ENCODE measurements at regions of chr7 and their contacts with region 1.

Region 1: GRCh38 chr7:100221231-100221718 is 1.5 kb downstream of the PVRIG start:
- DNase-seq: peak; percentile 62 to 95 (median 78)
- ATAC-seq: peak; percentile 69
- H3K4me3 ChIP-seq: peak overlapping the region; percentile 89
- H3K4me3 Mint-ChIP-seq: peak overlapping the region; percentile 95
- H3K27ac ChIP-seq: peak overlapping the region; percentile 98 to 99
- H3K27ac Mint-ChIP-seq: peak overlapping the region; percentile 98
- H3K4me1 ChIP-seq: peaks cover 85% of the 10 kb centered on the region
- H3K4me1 Mint-ChIP-seq: peaks cover 72% of the 10 kb centered on the region
- H3K27me3 ChIP-seq: no peaks in the 10 kb centered on the region
- H3K27me3 Mint-ChIP-seq: no peaks in the 10 kb centered on the region
- CTCF ChIP-seq: no peak

Region 2: DNA sequence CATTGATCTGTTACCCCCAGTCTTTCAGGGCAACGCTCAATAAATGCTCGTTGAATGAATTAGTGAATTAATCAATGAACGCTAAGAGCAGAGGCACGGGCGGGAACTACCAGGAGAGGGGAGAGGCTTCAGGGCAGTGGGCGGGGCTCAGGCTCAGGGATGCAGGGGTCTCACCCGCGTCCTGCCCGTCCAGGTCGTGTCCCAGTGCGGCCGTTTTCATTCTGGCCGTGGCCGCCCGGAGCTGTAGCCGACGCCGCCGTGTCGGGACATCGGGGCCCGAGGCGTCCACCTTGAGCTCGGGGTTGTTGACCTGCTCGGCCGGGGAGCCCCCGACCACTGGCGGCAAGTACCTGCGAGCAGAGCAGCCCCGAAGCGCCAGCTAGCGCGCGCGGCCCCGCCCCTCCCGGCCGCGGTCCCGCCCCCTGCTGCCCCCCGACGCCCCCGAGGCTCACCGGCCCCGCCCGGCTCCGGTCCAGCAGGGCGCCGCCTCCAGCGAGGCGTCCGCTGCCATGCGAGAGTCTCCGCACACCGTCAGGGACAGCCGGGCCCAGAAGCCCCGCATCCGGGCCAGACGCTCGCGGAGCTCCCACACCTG is 50.1 kb before region 1 on chr7:
- CTCF ChIA-PET with region 1: interaction called, 4 read pairs
- POLR2A ChIA-PET with region 1: interaction called, 14 read pairs
- intact Hi-C with region 1: loop called in 1 of 2 experiments (anchors 10 kb)
- DNase-seq: peak in 6 of 14 experiments; percentile 25 to 69 (median 56)
- ATAC-seq: peak; percentile 22
- H3K4me3 ChIP-seq: peak overlapping the region; percentile 52
- H3K4me3 Mint-ChIP-seq: peak overlapping the region; percentile 85
- H3K27ac ChIP-seq: peak overlapping the region in 1 of 2 donors; percentile 50
- H3K27ac Mint-ChIP-seq: peak overlapping the region; percentile 91
- H3K4me1 ChIP-seq: peaks cover 65% of the 10 kb centered on the region
- H3K4me1 Mint-ChIP-seq: peaks cover 62% of the 10 kb centered on the region
- H3K27me3 ChIP-seq: peaks cover 0 to 3% of the 10 kb centered on the region in 2 experiments
- H3K27me3 Mint-ChIP-seq: no peaks in the 10 kb centered on the region
- CTCF ChIP-seq: no peak

Region 3: GRCh38 chr7:100190048-100190711 is 31.1 kb before region 1 on chr7:
- CTCF ChIA-PET with region 1: interaction called, 6 read pairs
- POLR2A ChIA-PET with region 1: interaction called, 4 read pairs
- intact Hi-C with region 1: loop called (anchors 1 kb)
- DNase-seq: peak in 3 of 14 experiments; percentile 72 to 77 (median 73)
- ATAC-seq: peak; percentile 84
- H3K4me3 ChIP-seq: no peak overlapping the region
- H3K4me3 Mint-ChIP-seq: no peak overlapping the region
- H3K27ac ChIP-seq: no peak overlapping the region
- H3K27ac Mint-ChIP-seq: peak overlapping the region; percentile 25
- H3K4me1 ChIP-seq: peaks cover 1% of the 10 kb centered on the region
- H3K4me1 Mint-ChIP-seq: peaks cover 44% of the 10 kb centered on the region
- H3K27me3 ChIP-seq: no peaks in the 10 kb centered on the region
- H3K27me3 Mint-ChIP-seq: no peaks in the 10 kb centered on the region
- CTCF ChIP-seq: peak; percentile 55

Region 4: DNA sequence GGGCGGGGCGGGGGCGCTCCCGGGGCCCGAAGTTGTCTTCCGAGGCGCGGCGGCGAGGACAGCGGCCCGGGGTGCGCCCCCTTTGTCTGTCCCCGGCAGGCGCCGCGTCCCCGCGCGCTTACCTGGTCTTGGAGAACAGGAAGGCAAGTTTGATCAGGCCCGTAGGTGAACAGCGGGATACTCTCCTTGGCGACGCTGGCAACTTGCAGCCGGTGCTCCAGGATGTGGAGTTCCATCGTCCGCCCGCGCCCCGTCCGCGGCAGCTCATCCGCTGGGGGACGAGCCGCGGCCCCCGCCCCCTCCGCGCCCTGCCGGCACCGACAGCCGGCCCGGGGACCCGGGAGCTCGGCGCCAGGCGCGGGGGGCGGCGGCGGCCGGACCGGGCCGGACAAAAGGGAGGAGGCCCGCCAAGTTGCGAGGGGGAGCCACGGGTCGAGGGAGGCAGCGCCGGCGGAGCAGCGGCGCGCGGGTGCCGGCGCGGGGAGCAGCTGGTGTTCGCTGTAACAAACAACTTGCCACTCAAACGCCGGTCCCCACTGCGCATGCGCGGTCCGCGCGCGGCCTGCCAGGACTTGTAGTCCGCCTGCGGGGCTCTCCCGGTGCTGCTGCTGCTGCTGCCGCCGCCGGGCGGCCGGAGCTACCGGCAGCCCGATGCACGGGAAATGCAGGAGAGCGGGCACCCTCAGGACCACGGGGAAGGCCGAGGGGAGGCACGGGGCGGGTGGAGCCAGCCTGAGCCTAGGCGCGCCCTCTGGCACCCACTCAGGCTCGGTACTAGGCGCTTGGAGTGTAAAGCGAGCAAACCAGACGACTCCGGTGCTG is 50.7 kb after region 1 on chr7:
- CTCF ChIA-PET with region 1: interaction called, 3 read pairs
- POLR2A ChIA-PET with region 1: interaction called, 10 read pairs
- intact Hi-C with region 1: loop called (anchors 5 kb)
- DNase-seq: peak; percentile 97 to 100 (median 98)
- ATAC-seq: peak; percentile 91
- H3K4me3 ChIP-seq: peak overlapping the region; percentile 52
- H3K4me3 Mint-ChIP-seq: peak overlapping the region; percentile 85
- H3K27ac ChIP-seq: no peak overlapping the region
- H3K27ac Mint-ChIP-seq: peak overlapping the region; percentile 69
- H3K4me1 ChIP-seq: peaks cover 17% of the 10 kb centered on the region
- H3K4me1 Mint-ChIP-seq: peaks cover 8% of the 10 kb centered on the region
- H3K27me3 ChIP-seq: no peaks in the 10 kb centered on the region
- H3K27me3 Mint-ChIP-seq: no peaks in the 10 kb centered on the region
- CTCF ChIP-seq: no peak

Region 5: DNA sequence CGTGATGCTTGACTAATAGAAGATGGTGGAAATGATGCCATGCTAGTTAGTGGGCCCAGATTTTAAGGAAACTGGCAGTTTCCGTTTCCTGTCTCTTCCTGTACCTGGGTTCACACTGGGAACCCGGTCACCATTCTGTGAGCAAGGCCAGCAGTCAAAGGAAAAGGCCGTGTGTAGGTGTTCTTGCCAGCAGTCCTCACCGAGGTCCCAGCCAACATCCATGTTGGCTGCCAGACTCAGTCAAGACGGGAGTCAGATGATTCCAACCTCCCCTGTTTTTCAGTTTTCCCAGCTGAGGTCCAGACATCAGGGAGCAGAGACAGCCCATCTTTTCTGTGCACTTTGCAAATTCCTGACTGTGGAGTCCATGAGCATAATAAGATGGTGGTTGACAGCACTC is 121.5 kb after region 1 on chr7:
- CTCF ChIA-PET with region 1: interaction called, 3 read pairs
- POLR2A ChIA-PET with region 1: interaction called, 4 read pairs
- intact Hi-C with region 1: loop called in 1 of 2 experiments (anchors 5 kb)
- DNase-seq: peak in 1 of 14 experiments; percentile 9
- ATAC-seq: no peak
- H3K4me3 ChIP-seq: no peak overlapping the region
- H3K4me3 Mint-ChIP-seq: no peak overlapping the region
- H3K27ac ChIP-seq: no peak overlapping the region
- H3K27ac Mint-ChIP-seq: peak overlapping the region; percentile 78
- H3K4me1 ChIP-seq: peaks cover 18% of the 10 kb centered on the region
- H3K4me1 Mint-ChIP-seq: peaks cover 33% of the 10 kb centered on the region
- H3K27me3 ChIP-seq: no peaks in the 10 kb centered on the region
- H3K27me3 Mint-ChIP-seq: no peaks in the 10 kb centered on the region
- CTCF ChIP-seq: no peak

Region 6: DNA sequence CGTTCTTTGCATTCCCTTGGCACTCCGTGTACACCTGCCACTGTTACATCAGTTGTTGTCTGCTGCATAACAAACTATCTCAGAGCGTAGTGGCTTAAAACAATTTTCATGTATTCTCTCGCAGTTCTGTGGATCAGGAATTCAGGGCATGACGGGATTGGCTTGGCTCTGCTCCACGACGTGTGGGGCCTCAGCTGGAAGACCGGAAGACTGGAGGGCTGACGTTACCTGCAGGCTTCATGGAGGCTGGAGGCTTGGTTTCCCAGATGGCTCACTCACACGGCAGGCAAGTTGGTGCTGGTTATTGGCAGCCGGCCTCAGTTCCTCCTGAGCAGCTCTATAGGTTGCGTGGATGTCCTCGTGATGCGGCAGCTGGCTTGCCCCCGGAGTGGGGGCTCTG is 288.0 kb after region 1 on chr7:
- CTCF ChIA-PET with region 1: no interaction called
- POLR2A ChIA-PET with region 1: no interaction called
- intact Hi-C with region 1: no loop called
- DNase-seq: no peak
- ATAC-seq: no peak
- H3K4me3 ChIP-seq: no peak overlapping the region
- H3K4me3 Mint-ChIP-seq: no peak overlapping the region
- H3K27ac ChIP-seq: no peak overlapping the region
- H3K27ac Mint-ChIP-seq: no peak overlapping the region
- H3K4me1 ChIP-seq: no peaks in the 10 kb centered on the region
- H3K4me1 Mint-ChIP-seq: peaks cover 8% of the 10 kb centered on the region
- H3K27me3 ChIP-seq: no peaks in the 10 kb centered on the region
- H3K27me3 Mint-ChIP-seq: no peaks in the 10 kb centered on the region
- CTCF ChIP-seq: no peak